ENCODE measurements at regions of chr10 and their contacts with region 1.

Region 1: GRCh38 chr10:13787015-13787421 is 200.3 kb downstream of the PRPF18 start:
- DNase-seq: peak; percentile 79
- H3K4me3 Mint-ChIP-seq: peak overlapping the region; percentile 68
- H3K27ac Mint-ChIP-seq: peak overlapping the region; percentile 95
- H3K4me1 Mint-ChIP-seq: peaks cover 7% of the 10 kb centered on the region
- H3K27me3 Mint-ChIP-seq: peaks cover 2% of the 10 kb centered on the region

Region 2: DNA sequence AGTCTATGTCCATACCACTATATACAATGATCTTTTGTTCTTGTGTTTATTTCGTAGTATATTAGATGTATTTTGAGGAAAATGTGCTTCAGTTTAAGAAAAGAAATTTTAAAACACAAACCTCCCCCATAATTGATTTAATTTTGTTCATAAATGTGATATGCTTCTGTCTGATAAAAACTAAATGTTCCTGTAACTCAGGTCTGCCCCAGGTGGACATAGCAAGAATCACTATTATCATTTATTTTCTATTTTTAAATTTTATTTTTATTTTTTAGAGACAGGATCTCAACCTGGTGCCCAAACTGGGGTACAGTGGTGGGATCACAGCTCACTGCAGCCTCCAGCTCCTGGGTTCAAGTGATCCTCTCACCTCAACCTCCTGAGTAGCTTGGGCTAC is 301.4 kb before region 1 on chr10:
- intact Hi-C with region 1: no loop called
- DNase-seq: no peak
- H3K4me3 Mint-ChIP-seq: no peak overlapping the region
- H3K27ac Mint-ChIP-seq: no peak overlapping the region
- H3K4me1 Mint-ChIP-seq: no peaks in the 10 kb centered on the region
- H3K27me3 Mint-ChIP-seq: peaks cover 17% of the 10 kb centered on the region

Region 3: GRCh38 chr10:13586676-13587355 is 200.2 kb before region 1 on chr10 and contains the start of gene PRPF18:
- intact Hi-C with region 1: loop called (anchors 1 kb)
- DNase-seq: peak; percentile 89
- H3K4me3 Mint-ChIP-seq: peak within 1 kb of the TSS; percentile 100
- H3K27ac Mint-ChIP-seq: peak within 1 kb of the TSS; percentile 98
- H3K4me1 Mint-ChIP-seq: peaks cover 16% of the 10 kb centered on the region
- H3K27me3 Mint-ChIP-seq: peaks cover 11% of the 10 kb centered on the region
- total RNA-seq, gene PRPF18: 24.8 and 25.6 TPM in 2 replicates

Region 4: GRCh38 chr10:14009371-14010100 is 222.5 kb after region 1 on chr10:
- intact Hi-C with region 1: loop called (anchors 1 kb)
- DNase-seq: peak; percentile 37
- H3K4me3 Mint-ChIP-seq: peak overlapping the region; percentile 81
- H3K27ac Mint-ChIP-seq: peak overlapping the region; percentile 74
- H3K4me1 Mint-ChIP-seq: peaks cover 33% of the 10 kb centered on the region
- H3K27me3 Mint-ChIP-seq: peaks cover 19% of the 10 kb centered on the region

Region 5: DNA sequence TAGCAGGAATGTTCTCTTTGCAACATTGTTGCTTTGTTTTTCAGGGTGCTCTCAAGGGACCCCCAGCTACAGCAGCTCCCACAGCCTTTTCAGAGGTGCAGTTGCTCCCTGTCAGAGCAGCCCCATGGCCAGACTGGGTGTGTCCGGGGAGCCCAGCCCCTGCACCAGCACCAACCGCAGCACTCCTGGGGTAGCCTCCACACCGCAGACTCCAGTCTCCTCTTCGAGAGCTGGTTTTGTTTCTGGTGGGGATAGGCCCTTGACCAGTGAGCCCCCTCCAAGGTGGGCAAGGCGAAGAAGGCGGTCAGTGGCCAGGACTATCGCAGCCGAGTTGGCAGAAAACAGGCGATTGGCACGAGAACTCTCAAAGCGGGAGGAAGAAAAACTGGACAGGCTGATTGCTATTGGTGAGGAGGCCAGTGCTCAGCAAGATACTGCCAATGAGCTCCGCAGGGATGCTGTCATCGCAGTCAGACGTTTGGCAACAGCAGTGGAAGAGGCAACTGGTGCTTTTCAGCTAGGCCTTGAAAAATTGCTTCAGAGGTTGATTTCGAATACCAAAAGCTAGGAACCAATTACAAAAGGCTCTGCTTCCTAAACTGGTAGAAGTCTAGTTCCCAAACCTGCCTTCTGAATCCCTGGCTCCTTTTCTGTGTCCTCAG is 1056.4 kb after region 1 on chr10:
- intact Hi-C with region 1: loop called (anchors 10 kb)
- DNase-seq: no peak
- H3K4me3 Mint-ChIP-seq: no peak overlapping the region
- H3K27ac Mint-ChIP-seq: no peak overlapping the region
- H3K4me1 Mint-ChIP-seq: peaks cover 15% of the 10 kb centered on the region
- H3K27me3 Mint-ChIP-seq: no peaks in the 10 kb centered on the region